ENCODE measurements at regions of chr6 and their contacts with region 1.

Region 1: DNA sequence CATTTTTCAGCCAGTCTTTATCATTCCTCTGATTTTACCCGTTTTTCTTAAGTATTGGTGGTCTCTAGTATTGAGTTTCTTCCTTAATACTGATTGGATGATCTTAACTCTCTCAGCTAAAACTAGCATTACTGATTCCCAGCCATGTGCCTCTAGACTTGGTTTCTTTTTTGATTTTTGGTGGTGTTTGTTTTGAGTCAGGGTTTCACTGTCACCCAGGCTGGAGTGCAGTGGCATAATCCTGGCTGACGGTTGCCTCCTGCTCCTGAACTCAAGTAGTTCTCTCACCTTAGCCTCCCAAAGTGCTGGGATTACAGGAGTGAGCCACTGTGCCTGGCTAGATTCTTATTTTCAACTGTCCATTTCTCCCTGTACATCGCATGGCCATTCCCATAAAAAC is 24.9 kb downstream of the DPPA5 start:
- DNase-seq: no peak
- H3K4me3 Mint-ChIP-seq: no peak overlapping the region
- H3K27ac Mint-ChIP-seq: no peak overlapping the region
- H3K4me1 Mint-ChIP-seq: no peaks in the 10 kb centered on the region
- H3K27me3 Mint-ChIP-seq: peaks cover 46% of the 10 kb centered on the region

Region 2: DNA sequence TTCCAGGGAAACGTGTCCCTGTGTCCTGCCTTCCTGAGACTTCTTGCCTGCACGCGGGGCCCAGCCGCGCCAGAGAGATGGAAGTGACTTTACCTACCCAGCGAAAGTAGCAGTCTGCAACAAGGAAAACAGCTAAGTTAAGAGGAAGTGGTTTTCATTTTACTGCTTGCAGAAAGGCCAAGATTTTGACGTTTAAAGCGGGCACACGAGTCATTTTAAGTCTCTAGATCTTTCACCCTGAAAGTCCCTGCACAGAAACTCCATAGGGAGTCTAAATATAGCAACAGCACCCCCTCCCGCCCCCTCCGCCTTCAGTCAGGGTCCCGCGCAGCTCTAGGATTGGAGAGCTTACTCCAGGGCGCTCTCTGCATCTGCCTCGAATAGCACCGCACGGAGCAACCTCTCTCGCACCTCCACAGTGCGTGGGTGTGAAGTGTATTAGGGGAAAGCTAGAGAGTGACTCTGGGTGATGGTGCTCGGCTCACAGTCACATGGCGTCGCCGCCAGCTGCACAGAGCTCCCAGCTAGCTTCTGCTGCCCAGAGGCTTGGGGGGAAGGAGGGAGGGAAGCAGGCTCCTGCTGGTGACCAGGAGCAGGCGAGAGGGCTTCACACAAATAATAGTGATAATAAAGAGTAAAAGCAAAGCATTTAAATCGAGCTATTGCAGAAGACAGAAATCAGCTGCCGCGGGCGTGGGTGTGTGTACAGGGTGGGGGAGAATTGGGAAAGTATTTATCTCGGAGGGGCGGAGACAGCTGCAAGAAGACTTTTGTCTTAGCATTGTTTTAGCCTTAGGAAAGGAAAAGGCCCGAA is 709.1 kb before region 1 on chr6:
- CTCF ChIA-PET with region 1: interaction called, 10 read pairs
- DNase-seq: peak; percentile 71
- H3K4me3 Mint-ChIP-seq: peak overlapping the region; percentile 94
- H3K27ac Mint-ChIP-seq: peak overlapping the region; percentile 97
- H3K4me1 Mint-ChIP-seq: peaks cover 57% of the 10 kb centered on the region
- H3K27me3 Mint-ChIP-seq: peaks cover 7% of the 10 kb centered on the region

Region 3: GRCh38 chr6:73285674-73286283 is 43.4 kb before region 1 on chr6:
- CTCF ChIA-PET with region 1: interaction called, 11 read pairs
- DNase-seq: no peak
- H3K4me3 Mint-ChIP-seq: no peak overlapping the region
- H3K27ac Mint-ChIP-seq: no peak overlapping the region
- H3K4me1 Mint-ChIP-seq: peaks cover 2% of the 10 kb centered on the region
- H3K27me3 Mint-ChIP-seq: no peaks in the 10 kb centered on the region

Region 4: GRCh38 chr6:73388800-73389512 is 59.8 kb after region 1 on chr6:
- CTCF ChIA-PET with region 1: interaction called, 10 read pairs
- DNase-seq: peak; percentile 71
- H3K4me3 Mint-ChIP-seq: peak overlapping the region; percentile 75
- H3K27ac Mint-ChIP-seq: peak overlapping the region; percentile 80
- H3K4me1 Mint-ChIP-seq: peaks cover 37% of the 10 kb centered on the region
- H3K27me3 Mint-ChIP-seq: peaks cover 27% of the 10 kb centered on the region

Region 5: DNA sequence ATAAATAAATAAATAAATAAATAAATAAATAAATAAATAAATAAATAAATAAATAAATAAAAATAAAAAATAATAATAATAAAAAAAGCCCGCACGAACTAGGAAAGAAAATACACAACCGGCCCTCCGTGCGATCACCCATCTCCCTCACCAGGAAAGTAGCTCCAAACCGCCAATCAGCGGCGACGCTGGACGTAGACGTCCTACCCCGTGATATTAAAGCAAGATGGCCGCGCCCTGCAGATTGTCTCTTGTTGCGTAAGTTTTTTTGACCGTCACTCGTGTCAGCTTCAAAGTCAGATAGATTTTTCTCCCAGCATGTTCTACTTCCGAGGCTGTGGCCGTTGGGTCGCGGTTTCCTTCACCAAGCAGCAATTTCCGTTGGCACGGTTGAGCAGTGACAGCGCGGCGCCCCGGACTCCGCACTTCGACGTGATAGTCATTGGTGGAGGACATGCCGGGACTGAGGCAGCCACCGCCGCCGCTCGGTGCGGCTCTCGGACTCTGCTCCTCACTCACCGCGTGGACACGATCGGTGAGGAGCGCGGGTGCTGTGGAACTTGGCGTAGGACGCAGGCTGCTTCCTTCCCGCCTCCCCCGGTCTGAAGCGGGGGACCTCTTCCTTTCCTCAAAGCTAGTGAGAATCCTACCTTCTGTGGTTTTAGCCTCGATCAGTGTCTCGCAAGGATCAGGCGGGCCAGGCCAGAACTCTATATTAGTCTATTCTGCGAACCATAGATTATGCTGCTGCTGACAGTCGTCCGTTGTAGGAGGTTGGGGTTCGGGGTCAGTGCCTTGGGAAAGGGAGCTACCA is 132.5 kb after region 1 on chr6 and contains the start of gene MTO1:
- CTCF ChIA-PET with region 1: no interaction called
- DNase-seq: peak; percentile 91
- H3K4me3 Mint-ChIP-seq: peak within 1 kb of the TSS; percentile 98
- H3K27ac Mint-ChIP-seq: peak within 1 kb of the TSS; percentile 100
- H3K4me1 Mint-ChIP-seq: peaks cover 69% of the 10 kb centered on the region
- H3K27me3 Mint-ChIP-seq: no peaks in the 10 kb centered on the region